IMR-90 (cell line): ENCODE measurements at regions of chr12 and their contacts with region 1.

Region 1: GRCh38 chr12:53321074-53321814 is at the start of gene AAAS:
- DNase-seq: peak; percentile 93
- ATAC-seq: peak; percentile 84
- H3K4me3 ChIP-seq: peak within 1 kb of the TSS; percentile 83
- H3K27ac ChIP-seq: peak within 1 kb of the TSS; percentile 95
- H3K4me1 ChIP-seq: peaks cover 12% of the 10 kb centered on the region
- H3K27me3 ChIP-seq: no peaks in the 10 kb centered on the region
- CTCF ChIP-seq: peak; percentile 98
- POLR2A ChIP-seq: peak; percentile 56; the same call in 1 of the 2 replicates
- RAD21 ChIP-seq: peak; percentile 69
- total RNA-seq, gene AAAS: 37.5 and 44.6 TPM in 2 replicates

Region 2: GRCh38 chr12:53295070-53295890 is 26.0 kb before region 1 on chr12 and contains the start of gene PFDN5:
- CTCF ChIA-PET with region 1: interaction called, 10 read pairs
- POLR2A ChIA-PET with region 1: interaction called, 6 read pairs
- dilution Hi-C with region 1: no loop called
- in situ Hi-C with region 1: no loop called
- intact Hi-C with region 1: loop called (anchors 2 kb)
- DNase-seq: peak; percentile 92
- ATAC-seq: peak; percentile 83
- H3K4me3 ChIP-seq: peak within 1 kb of the TSS; percentile 92
- H3K27ac ChIP-seq: peak within 1 kb of the TSS; percentile 95
- H3K4me1 ChIP-seq: peaks cover 20% of the 10 kb centered on the region
- H3K27me3 ChIP-seq: no peaks in the 10 kb centered on the region
- CTCF ChIP-seq: no peak
- POLR2A ChIP-seq: peak; percentile 92
- RAD21 ChIP-seq: no peak
- total RNA-seq, gene PFDN5: 764 and 1,011 TPM in 2 replicates

Region 3: GRCh38 chr12:53308276-53308675 is 13.0 kb before region 1 on chr12:
- CTCF ChIA-PET with region 1: interaction called, 5 read pairs
- POLR2A ChIA-PET with region 1: no interaction called
- dilution Hi-C with region 1: no loop called
- in situ Hi-C with region 1: no loop called
- intact Hi-C with region 1: loop called (anchors 1 kb)
- DNase-seq: no peak
- ATAC-seq: no peak
- H3K4me3 ChIP-seq: no peak overlapping the region
- H3K27ac ChIP-seq: no peak overlapping the region
- H3K4me1 ChIP-seq: no peaks in the 10 kb centered on the region
- H3K27me3 ChIP-seq: no peaks in the 10 kb centered on the region
- CTCF ChIP-seq: no peak
- POLR2A ChIP-seq: no peak
- RAD21 ChIP-seq: no peak

Region 4: GRCh38 chr12:53344824-53345485 is 23.7 kb after region 1 on chr12:
- CTCF ChIA-PET with region 1: interaction called, 14 read pairs
- POLR2A ChIA-PET with region 1: no interaction called
- dilution Hi-C with region 1: no loop called
- in situ Hi-C with region 1: no loop called
- intact Hi-C with region 1: loop called (anchors 1 kb)
- DNase-seq: peak; percentile 72
- ATAC-seq: peak; percentile 91
- H3K4me3 ChIP-seq: peak overlapping the region; percentile 76
- H3K27ac ChIP-seq: peak overlapping the region; percentile 40
- H3K4me1 ChIP-seq: peaks cover 7% of the 10 kb centered on the region; the same call in 1 of the 2 replicates
- H3K27me3 ChIP-seq: peaks cover 11% of the 10 kb centered on the region
- CTCF ChIP-seq: peak; percentile 87
- POLR2A ChIP-seq: peak; percentile 61
- RAD21 ChIP-seq: peak; percentile 76

Region 5: DNA sequence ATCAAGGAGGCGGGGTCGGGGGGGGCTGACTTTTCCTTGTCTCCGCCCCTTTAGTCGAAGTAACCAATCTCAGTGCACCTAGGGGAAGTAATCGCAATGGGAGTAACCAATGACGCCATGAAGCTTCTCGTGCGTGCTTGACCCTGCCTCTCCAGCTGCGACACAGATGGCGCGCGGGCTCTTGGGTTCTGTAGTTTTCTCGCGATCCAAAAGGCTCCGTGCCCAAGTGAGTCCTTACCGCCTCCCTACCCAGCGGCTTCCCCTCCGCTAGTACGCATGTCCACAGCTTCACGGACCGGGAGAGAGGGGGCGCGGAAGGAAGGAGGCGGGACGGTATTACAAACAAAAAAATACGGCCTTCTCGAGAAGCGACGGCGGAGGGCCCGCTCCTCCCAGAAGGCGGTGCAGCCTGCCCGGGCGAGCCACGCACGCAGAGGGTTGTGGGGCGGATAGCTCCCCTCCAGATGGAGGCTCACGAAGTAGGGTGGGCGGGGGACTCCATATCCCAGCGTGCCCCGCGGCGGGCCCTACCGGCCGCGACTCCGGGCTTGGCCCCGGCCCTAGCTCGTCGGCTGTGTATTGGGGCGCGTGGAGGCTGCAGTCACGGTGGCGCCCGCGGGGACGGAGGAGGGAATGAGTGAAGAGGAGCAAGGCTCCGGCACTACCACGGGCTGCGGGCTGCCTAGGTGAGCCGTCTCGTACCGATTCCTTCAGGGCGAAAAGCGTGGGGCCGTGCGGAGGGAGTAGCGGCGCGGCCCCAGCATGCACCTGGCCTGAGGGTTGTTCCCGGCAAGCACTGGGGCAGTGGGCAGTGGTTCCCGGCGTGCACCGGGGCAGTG is 179.8 kb after region 1 on chr12 and contains the start of gene TARBP2:
- CTCF ChIA-PET with region 1: no interaction called
- POLR2A ChIA-PET with region 1: no interaction called
- dilution Hi-C with region 1: no loop called
- in situ Hi-C with region 1: loop called (anchors 10 kb)
- intact Hi-C with region 1: loop called (anchors 2 kb)
- DNase-seq: peak; percentile 100
- ATAC-seq: peak; percentile 71
- H3K4me3 ChIP-seq: peak within 1 kb of the TSS; percentile 76
- H3K27ac ChIP-seq: peak within 1 kb of the TSS; percentile 96
- H3K4me1 ChIP-seq: peaks cover 14% of the 10 kb centered on the region
- H3K27me3 ChIP-seq: no peaks in the 10 kb centered on the region
- CTCF ChIP-seq: 0 out of 2 replicates have a peak, but pooled peaks have one; percentile 9
- POLR2A ChIP-seq: peak; percentile 76
- RAD21 ChIP-seq: no peak
- total RNA-seq, gene TARBP2: 27.4 and 27.8 TPM in 2 replicates

Region 6: GRCh38 chr12:53508534-53509199 is 187.4 kb after region 1 on chr12:
- CTCF ChIA-PET with region 1: interaction called, 7 read pairs
- POLR2A ChIA-PET with region 1: no interaction called
- dilution Hi-C with region 1: no loop called
- in situ Hi-C with region 1: loop called (anchors 10 kb)
- intact Hi-C with region 1: loop called (anchors 1 kb)
- DNase-seq: peak; percentile 67
- ATAC-seq: peak; percentile 93
- H3K4me3 ChIP-seq: no peak overlapping the region
- H3K27ac ChIP-seq: no peak overlapping the region
- H3K4me1 ChIP-seq: no peaks in the 10 kb centered on the region
- H3K27me3 ChIP-seq: no peaks in the 10 kb centered on the region
- CTCF ChIP-seq: peak; percentile 94
- POLR2A ChIP-seq: peak; percentile 52; the same call in 1 of the 2 replicates
- RAD21 ChIP-seq: peak; percentile 95